GM23248 (cell line): ENCODE measurements at regions of chr12 and their contacts with region 1.

Region 1: DNA sequence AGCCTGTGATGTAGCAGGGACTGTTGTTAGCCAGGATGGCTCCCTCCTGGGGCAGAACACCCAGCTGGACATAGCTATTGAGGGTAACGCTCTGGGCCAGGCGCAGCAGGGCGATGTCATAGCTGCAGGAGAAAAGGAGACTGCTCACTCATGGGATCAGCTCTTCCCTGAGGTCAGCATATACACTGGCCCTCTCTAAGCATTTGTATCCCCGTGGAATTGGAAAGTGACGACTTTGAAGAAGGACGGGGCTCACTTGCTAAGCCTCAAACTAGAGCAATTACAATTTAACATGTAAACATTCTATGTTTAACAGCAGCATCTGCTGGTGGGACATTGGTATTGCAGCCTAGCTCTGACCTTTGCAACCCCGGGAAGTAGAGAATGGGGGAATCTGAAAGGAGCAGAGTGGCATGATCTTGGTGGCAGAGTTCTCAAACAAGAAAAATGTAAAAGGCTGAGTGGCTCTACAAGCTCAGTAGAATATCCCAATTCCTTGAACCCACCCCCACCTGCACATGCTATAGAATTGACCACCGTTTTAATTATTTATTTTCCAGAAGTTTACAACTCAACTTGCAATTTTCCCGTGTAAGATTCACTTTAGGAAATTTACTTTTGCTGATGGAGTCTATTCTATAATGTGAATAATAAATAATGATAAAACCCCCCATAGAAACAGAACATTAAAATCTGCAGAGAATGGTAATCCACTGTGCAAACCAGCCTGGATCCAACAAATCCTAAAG is 5.0 kb downstream of the CELA1 start:
- DNase-seq: peak; percentile 77
- H3K4me3 ChIP-seq: peak overlapping the region; percentile 43
- H3K27ac ChIP-seq: no peak overlapping the region
- H3K4me1 ChIP-seq: no peaks in the 10 kb centered on the region
- H3K27me3 ChIP-seq: no peaks in the 10 kb centered on the region

Region 2: DNA sequence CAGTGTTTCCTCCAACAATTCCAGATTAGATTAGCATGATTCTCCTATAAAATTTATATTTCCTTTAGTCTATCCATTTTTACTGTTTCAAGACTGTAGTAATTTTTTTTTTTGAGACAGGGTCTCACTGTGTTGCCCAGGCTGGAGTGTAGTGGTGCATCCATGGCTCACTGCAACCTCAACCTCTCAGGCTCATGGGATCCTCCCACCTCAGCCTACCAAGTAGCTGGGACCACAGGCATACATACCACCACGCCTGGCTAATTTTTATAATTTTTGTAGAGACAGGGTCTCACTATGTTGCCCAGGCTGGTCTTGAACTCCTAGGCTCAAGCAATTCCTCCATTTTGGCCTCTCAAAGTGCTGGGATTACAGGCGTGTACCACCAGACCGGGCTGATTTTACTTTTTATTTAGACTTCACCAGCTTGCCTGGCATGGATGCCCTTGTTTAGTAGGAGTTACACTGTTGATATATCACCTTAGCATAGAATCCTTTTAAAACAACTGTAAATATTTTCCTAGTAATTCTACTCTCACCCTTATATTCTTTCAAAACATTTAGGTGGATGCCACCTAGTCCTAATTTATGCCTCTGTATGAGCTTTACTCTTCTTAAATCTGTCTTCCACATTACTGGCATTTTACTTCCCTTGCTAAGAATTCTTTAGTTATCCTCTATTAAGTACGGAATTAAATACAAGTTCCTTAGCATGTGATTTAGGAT is 1002.4 kb before region 1 on chr12:
- in situ Hi-C with region 1: no loop called
- DNase-seq: no peak
- H3K4me3 ChIP-seq: no peak overlapping the region
- H3K27ac ChIP-seq: no peak overlapping the region
- H3K4me1 ChIP-seq: no peaks in the 10 kb centered on the region
- H3K27me3 ChIP-seq: no peaks in the 10 kb centered on the region

Region 3: GRCh38 chr12:51047655-51048540 is 293.5 kb before region 1 on chr12 and contains the start of gene LETMD1:
- in situ Hi-C with region 1: loop called (anchors 10 kb)
- DNase-seq: peak; percentile 100
- H3K4me3 ChIP-seq: peak within 1 kb of the TSS; percentile 88
- H3K27ac ChIP-seq: peak within 1 kb of the TSS; percentile 72
- H3K4me1 ChIP-seq: peaks cover 21% of the 10 kb centered on the region
- H3K27me3 ChIP-seq: no peaks in the 10 kb centered on the region
- total RNA-seq, gene LETMD1: 29.8 and 67.5 TPM in 2 replicates

Region 4: GRCh38 chr12:51269174-51270066 is 72.0 kb before region 1 on chr12:
- in situ Hi-C with region 1: loop called (anchors 10 kb)
- DNase-seq: peak; percentile 63
- H3K4me3 ChIP-seq: peak overlapping the region; percentile 78
- H3K27ac ChIP-seq: no peak overlapping the region
- H3K4me1 ChIP-seq: peaks cover 14% of the 10 kb centered on the region
- H3K27me3 ChIP-seq: no peaks in the 10 kb centered on the region